Activated CD8-positive, alpha-beta T cell treated with anti-CD3 and anti-CD28 coated beads for 36 hours (primary cell): ENCODE measurements at regions of chr11 and their contacts with region 1.

Region 1: DNA sequence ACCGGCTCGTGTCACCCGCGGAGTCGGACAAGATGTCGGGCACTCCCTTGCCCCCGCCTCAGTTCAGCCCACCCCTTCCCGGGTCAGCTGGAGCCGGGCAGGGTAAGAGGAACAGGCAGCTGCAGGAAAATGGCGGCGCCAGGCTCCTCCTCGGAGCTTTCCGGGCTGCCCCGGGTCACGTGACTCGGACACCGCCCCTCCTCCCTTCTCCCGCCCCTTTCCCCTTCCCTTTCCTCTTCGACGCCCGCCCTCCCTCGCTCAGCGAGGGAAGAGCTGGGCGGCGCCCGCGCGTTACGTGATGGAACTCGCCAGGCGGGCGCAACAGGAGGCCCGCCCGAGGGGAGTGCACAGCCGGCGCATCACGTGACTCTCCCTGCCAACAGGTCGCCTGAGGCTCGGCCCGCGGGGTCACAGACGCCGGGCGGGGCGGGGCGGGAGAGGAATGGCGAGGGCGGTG is at the start of gene PICALM:
- DNase-seq: peak; percentile 98
- ATAC-seq: peak; percentile 91
- H3K4me3 Mint-ChIP-seq: peak within 1 kb of the TSS; percentile 100
- H3K27ac Mint-ChIP-seq: peak within 1 kb of the TSS; percentile 98
- H3K4me1 Mint-ChIP-seq: peaks cover 21% of the 10 kb centered on the region
- H3K27me3 Mint-ChIP-seq: no peaks in the 10 kb centered on the region
- CTCF ChIP-seq: no peak
- total RNA-seq, gene PICALM: 57.5 to 61.2 TPM

Region 2: GRCh38 chr11:85875142-85875922 is 193.6 kb before region 1 on chr11:
- CTCF ChIA-PET with region 1: no interaction called
- POLR2A ChIA-PET with region 1: no interaction called
- intact Hi-C with region 1: no loop called
- DNase-seq: no peak
- ATAC-seq: no peak
- H3K4me3 Mint-ChIP-seq: no peak overlapping the region
- H3K27ac Mint-ChIP-seq: no peak overlapping the region
- H3K4me1 Mint-ChIP-seq: peaks cover 18% of the 10 kb centered on the region
- H3K27me3 Mint-ChIP-seq: no peaks in the 10 kb centered on the region
- CTCF ChIP-seq: no peak

Region 3: DNA sequence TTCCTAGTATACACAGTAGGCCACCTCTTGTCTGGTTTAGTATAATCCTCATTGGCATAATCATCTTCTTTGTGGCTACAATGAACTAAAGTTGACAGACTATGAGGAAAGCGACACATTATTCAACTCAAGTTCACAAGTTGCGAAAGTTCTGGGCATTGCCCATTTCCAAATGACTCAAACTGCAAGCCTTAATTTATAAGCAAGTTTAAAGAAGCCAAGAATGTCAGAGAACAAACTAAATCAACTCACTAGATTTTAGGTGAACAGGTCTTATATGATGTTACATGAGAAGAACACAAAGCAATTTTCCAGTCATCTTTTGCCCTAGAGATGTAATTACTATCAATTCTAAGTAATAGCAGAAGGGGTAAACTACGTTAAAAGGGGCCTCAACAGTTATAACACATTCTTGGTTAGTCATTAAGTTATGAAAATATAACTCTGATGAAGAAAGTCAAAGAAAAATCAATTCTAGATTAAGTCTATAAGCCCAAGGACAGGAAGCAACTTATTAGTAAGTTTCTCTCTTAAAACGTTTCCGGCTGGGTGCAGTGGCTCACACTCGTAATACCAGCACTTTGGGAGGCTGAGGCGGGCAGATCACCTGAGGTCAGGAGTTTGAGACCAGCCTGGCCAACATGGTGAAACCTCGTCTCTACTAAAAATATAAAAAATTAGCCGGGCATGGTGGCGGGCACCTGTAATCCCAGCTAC is 21.5 kb before region 1 on chr11:
- CTCF ChIA-PET with region 1: interaction called, 47 read pairs
- POLR2A ChIA-PET with region 1: interaction called, 31 read pairs
- intact Hi-C with region 1: loop called (anchors 2 kb)
- DNase-seq: peak; percentile 76
- ATAC-seq: peak; percentile 71
- H3K4me3 Mint-ChIP-seq: peak overlapping the region; percentile 37
- H3K27ac Mint-ChIP-seq: peak overlapping the region; percentile 92
- H3K4me1 Mint-ChIP-seq: peaks cover 86% of the 10 kb centered on the region
- H3K27me3 Mint-ChIP-seq: no peaks in the 10 kb centered on the region
- CTCF ChIP-seq: no peak

Region 4: GRCh38 chr11:86052693-86053641 is 16.0 kb before region 1 on chr11:
- CTCF ChIA-PET with region 1: interaction called, 5 read pairs
- POLR2A ChIA-PET with region 1: interaction called, 31 read pairs
- intact Hi-C with region 1: no loop called
- DNase-seq: no peak
- ATAC-seq: no peak
- H3K4me3 Mint-ChIP-seq: no peak overlapping the region
- H3K27ac Mint-ChIP-seq: peak overlapping the region; percentile 39
- H3K4me1 Mint-ChIP-seq: peaks cover 80% of the 10 kb centered on the region
- H3K27me3 Mint-ChIP-seq: no peaks in the 10 kb centered on the region
- CTCF ChIP-seq: no peak

Region 5: GRCh38 chr11:86124834-86125233 is 55.9 kb after region 1 on chr11:
- CTCF ChIA-PET with region 1: no interaction called
- POLR2A ChIA-PET with region 1: no interaction called
- intact Hi-C with region 1: no loop called
- DNase-seq: no peak
- ATAC-seq: peak; percentile 73
- H3K4me3 Mint-ChIP-seq: no peak overlapping the region
- H3K27ac Mint-ChIP-seq: no peak overlapping the region
- H3K4me1 Mint-ChIP-seq: peaks cover 17% of the 10 kb centered on the region
- H3K27me3 Mint-ChIP-seq: peaks cover 3% of the 10 kb centered on the region
- CTCF ChIP-seq: no peak

Region 6: DNA sequence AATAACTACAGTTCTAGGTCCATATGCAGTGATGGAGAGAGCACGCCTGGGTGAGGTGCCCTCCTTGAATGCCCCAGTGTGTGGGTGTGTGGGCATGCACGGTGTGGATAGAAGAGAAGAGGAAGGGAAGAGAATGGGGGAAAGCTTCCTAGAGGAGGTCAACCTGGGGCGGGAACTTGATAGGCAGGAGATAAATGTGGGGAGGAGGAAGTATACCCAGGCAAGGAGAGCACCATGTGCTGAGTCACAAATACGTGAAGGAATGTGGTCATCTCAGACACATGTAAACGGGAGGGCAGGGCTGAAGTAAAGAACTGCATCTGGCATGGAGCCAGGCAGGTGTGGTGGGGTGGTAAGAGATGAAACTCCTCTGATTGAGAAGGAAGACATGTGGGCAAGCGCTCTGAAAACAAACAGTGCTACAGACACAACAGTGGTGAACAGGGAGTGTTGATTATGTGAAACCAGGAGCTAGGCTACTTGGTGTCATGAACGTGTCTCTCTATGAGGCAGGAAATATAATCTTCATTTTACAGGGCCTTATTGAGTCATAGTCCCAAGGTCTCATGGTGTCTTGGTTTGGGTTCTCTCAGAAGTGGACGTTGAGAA is 114.1 kb after region 1 on chr11:
- CTCF ChIA-PET with region 1: interaction called, 4 read pairs
- POLR2A ChIA-PET with region 1: interaction called, 11 read pairs
- intact Hi-C with region 1: no loop called
- DNase-seq: peak; percentile 91
- ATAC-seq: peak; percentile 81
- H3K4me3 Mint-ChIP-seq: no peak overlapping the region
- H3K27ac Mint-ChIP-seq: no peak overlapping the region
- H3K4me1 Mint-ChIP-seq: peaks cover 11% of the 10 kb centered on the region
- H3K27me3 Mint-ChIP-seq: no peaks in the 10 kb centered on the region
- CTCF ChIP-seq: no peak

Region 7: GRCh38 chr11:86244522-86245368 is 175.8 kb after region 1 on chr11 and contains the start of gene EED:
- CTCF ChIA-PET with region 1: interaction called, 3 read pairs
- POLR2A ChIA-PET with region 1: interaction called, 37 read pairs
- intact Hi-C with region 1: no loop called
- DNase-seq: peak; percentile 95
- ATAC-seq: peak; percentile 87
- H3K4me3 Mint-ChIP-seq: no peak within 1 kb of the TSS
- H3K27ac Mint-ChIP-seq: no peak within 1 kb of the TSS
- H3K4me1 Mint-ChIP-seq: peaks cover 32% of the 10 kb centered on the region
- H3K27me3 Mint-ChIP-seq: no peaks in the 10 kb centered on the region
- CTCF ChIP-seq: no peak
- total RNA-seq, gene EED: 114 to 117 TPM

Region 8: DNA sequence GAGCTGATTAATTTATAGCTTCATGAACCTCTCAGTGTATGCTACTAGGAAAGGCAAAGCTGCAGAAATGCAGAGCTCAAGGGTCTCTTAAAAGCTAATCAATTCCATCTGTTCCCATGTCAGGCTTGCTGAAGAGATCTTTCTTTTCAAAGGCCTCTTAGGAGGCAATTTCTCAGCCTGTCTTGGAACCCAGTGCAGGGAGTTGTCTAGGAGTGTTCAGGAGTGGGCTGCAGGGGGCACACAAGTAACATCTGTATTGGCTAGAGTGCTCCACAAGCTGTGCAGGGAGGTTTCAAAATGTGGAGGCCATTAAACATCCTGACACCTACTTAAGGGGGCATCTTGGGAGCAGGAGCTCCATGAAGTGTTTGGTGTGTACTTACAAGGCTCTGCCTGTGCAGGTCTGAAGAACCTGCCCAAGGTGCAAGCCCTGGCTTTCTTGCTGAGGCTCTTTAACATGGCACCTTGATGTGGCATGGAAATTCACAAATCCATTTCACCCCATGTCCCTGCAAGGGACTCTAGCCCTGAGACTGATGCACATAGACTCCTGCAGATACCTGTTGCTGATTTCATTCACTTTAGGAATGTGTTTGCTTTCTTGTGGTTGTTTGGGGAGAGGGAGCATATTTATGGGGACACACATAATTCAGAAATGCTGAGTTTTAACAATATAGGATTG is 468.7 kb after region 1 on chr11:
- CTCF ChIA-PET with region 1: no interaction called
- POLR2A ChIA-PET with region 1: no interaction called
- intact Hi-C with region 1: no loop called
- DNase-seq: no peak
- ATAC-seq: no peak
- H3K4me3 Mint-ChIP-seq: no peak overlapping the region
- H3K27ac Mint-ChIP-seq: no peak overlapping the region
- H3K4me1 Mint-ChIP-seq: no peaks in the 10 kb centered on the region
- H3K27me3 Mint-ChIP-seq: peaks cover 2% of the 10 kb centered on the region
- CTCF ChIP-seq: no peak